Breast epithelium (tissue), 4 donors: ENCODE measurements at regions of chr11 and their contacts with region 1.

Region 1: DNA sequence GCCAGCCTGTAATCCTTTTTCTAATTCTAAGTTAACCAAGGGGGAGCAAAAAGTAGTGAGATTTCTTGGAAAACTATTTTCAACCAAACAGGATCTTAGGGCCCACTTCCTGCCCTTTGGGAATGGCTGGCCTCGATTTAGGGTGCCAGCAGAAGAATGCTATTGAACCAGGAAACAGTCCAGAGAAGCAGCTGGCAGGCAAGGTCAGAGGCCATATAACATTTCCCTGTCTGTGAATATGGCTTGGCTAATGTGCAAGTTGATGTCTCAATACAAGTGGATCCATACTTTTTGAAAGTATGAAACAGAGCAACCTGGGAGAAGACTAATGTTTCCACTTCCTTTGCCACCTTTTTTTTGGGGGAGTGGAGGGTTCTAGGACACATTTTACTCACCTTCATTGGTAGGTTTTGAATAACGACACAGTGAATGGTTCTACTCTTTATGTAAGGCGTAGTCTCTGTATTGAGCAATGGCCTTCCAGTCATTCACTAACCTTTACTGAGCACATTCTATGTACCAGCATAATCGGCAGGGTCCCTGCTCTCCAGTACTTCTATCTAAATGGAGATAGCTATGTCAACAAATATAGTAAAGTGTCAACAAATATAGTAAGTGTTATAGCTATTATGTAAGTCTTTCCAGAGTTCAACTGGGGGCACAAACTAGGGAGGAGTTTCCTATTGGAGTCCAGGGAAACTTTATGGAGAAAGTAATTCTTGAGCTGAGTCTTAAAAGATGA is 34.2 kb upstream of the RRM1 start:
- DNase-seq: no peak
- H3K4me3 ChIP-seq: no peak overlapping the region
- H3K27ac ChIP-seq: peak overlapping the region in 1 of 2 donors; percentile 10
- H3K4me1 ChIP-seq: no peaks in the 10 kb centered on the region
- H3K27me3 ChIP-seq: no peaks in the 10 kb centered on the region
- CTCF ChIP-seq: no peak
- POLR2A ChIP-seq: no peak

Region 2: GRCh38 chr11:4006946-4007680 is 53.2 kb before region 1 on chr11:
- intact Hi-C with region 1: no loop called
- DNase-seq: no peak
- H3K4me3 ChIP-seq: no peak overlapping the region
- H3K27ac ChIP-seq: no peak overlapping the region
- H3K4me1 ChIP-seq: no peaks in the 10 kb centered on the region
- H3K27me3 ChIP-seq: no peaks in the 10 kb centered on the region
- CTCF ChIP-seq: no peak
- POLR2A ChIP-seq: no peak

Region 3: GRCh38 chr11:4074301-4074701 is 13.9 kb after region 1 on chr11:
- intact Hi-C with region 1: loop called (anchors 2 kb)
- DNase-seq: no peak
- H3K4me3 ChIP-seq: no peak overlapping the region
- H3K27ac ChIP-seq: no peak overlapping the region
- H3K4me1 ChIP-seq: peaks cover 0 to 4% of the 10 kb centered on the region in 2 donors
- H3K27me3 ChIP-seq: no peaks in the 10 kb centered on the region
- CTCF ChIP-seq: no peak
- POLR2A ChIP-seq: no peak